MCF 10A (cell line): ENCODE measurements at regions of chr22 and their contacts with region 1.

Region 1: DNA sequence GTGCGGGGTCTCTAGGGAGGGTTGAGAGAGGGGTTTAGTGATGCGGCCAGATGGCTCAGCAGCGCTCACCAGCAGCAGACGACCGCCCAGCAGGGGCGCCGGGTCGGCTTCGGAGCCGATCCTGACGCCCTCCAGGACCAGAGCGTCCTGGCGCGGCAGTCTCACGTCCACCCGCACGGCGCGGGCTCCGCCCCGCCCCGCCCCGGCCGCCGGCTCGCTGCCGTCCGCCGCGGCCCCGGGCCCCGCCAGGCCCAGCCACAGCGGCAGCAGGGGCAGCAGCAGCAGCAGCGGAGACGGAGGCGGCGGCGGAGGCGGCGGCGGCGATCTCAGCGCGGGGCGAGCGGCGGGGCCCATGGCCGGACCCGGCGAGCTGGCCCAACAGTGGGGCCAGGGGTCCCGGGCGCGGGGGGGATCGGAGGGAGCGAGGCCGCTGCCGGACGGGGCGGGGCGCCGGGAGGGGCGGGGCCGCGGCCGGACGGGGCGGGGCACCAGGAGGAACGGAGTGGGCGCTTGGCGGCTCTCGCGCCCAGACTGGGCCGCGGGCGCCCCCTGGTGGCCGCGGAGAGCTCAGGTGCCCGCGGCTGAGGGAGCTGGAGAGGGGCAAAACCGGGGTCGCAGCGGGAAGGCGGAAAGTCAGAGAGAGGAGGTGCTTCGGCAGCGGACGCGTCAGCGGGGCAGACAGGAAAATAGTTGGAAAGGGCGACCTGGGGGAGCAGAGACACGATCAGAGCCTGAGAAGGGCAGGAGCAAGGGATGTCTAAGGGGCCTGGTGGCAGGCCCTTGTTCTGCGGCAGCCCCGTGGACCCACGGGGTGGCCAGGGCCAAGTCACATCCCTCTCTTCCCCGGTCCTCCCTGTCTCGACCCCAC is at the start of gene RNF215:
- DNase-seq: peak; percentile 74
- H3K4me3 Mint-ChIP-seq: peak within 1 kb of the TSS; percentile 79
- H3K27ac Mint-ChIP-seq: peak within 1 kb of the TSS; percentile 74
- H3K4me1 Mint-ChIP-seq: peaks cover 12% of the 10 kb centered on the region
- H3K27me3 Mint-ChIP-seq: no peaks in the 10 kb centered on the region
- CTCF ChIP-seq: peak; percentile 95
- total RNA-seq, gene RNF215: 18.4 and 19.6 TPM in 2 replicates

Region 2: GRCh38 chr22:30104501-30105156 is 282.6 kb before region 1 on chr22:
- CTCF ChIA-PET with region 1: interaction called, 13 read pairs
- POLR2A ChIA-PET with region 1: no interaction called
- intact Hi-C with region 1: loop called (anchors 1 kb)
- DNase-seq: no peak
- H3K4me3 Mint-ChIP-seq: no peak overlapping the region
- H3K27ac Mint-ChIP-seq: no peak overlapping the region
- H3K4me1 Mint-ChIP-seq: peaks cover 6% of the 10 kb centered on the region
- H3K27me3 Mint-ChIP-seq: no peaks in the 10 kb centered on the region
- CTCF ChIP-seq: no peak

Region 3: DNA sequence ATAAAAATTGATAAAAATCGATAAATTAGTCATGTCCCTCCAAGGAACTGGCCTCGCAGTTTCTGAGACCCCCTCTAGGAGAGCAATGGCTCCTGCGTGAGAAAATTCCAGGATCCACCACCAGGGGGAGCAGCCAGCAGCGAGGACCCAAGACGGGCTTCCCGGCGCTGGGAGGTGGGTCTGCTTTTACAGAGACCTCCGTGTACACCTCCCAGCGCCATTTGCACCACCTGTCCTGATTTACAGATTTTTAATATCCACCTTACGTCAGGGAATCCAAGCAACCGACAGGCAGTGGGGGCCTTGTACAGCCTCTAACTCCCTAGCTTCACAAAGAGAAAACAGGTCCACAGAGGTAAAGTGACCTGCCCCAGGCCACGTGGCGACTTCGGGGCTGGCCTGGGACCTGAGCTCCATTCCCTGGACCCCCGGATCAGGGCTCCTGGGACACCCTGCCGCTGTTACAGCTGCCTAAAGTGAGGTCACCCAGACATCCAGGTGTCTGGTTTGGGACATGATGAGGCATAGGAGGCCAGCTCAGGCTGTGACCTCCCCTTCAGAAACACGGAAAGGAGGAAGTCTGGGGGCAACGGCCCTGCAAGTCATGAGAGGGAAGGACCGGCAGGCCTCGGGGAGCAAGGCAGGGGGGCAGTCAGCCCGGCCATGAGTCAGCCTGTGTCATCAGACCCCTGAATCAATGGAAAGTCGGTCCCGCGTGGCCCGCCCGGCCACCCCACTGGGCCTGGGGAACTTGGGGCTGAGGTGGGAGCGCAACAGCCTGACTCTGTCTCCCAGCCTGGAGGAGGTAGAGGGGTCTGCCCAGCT is 124.1 kb before region 1 on chr22:
- CTCF ChIA-PET with region 1: interaction called, 8 read pairs
- POLR2A ChIA-PET with region 1: interaction called, 3 read pairs
- intact Hi-C with region 1: loop called (anchors 1 kb)
- DNase-seq: peak; percentile 64
- H3K4me3 Mint-ChIP-seq: peak overlapping the region; percentile 47
- H3K27ac Mint-ChIP-seq: no peak overlapping the region
- H3K4me1 Mint-ChIP-seq: peaks cover 6% of the 10 kb centered on the region
- H3K27me3 Mint-ChIP-seq: no peaks in the 10 kb centered on the region
- CTCF ChIP-seq: peak; percentile 99

Region 4: GRCh38 chr22:30402028-30402765 is 15.0 kb after region 1 on chr22:
- CTCF ChIA-PET with region 1: interaction called, 12 read pairs
- POLR2A ChIA-PET with region 1: interaction called, 3 read pairs
- intact Hi-C with region 1: no loop called
- DNase-seq: no peak
- H3K4me3 Mint-ChIP-seq: no peak overlapping the region
- H3K27ac Mint-ChIP-seq: peak overlapping the region; percentile 54
- H3K4me1 Mint-ChIP-seq: peaks cover 35% of the 10 kb centered on the region
- H3K27me3 Mint-ChIP-seq: no peaks in the 10 kb centered on the region
- CTCF ChIP-seq: no peak

Region 5: DNA sequence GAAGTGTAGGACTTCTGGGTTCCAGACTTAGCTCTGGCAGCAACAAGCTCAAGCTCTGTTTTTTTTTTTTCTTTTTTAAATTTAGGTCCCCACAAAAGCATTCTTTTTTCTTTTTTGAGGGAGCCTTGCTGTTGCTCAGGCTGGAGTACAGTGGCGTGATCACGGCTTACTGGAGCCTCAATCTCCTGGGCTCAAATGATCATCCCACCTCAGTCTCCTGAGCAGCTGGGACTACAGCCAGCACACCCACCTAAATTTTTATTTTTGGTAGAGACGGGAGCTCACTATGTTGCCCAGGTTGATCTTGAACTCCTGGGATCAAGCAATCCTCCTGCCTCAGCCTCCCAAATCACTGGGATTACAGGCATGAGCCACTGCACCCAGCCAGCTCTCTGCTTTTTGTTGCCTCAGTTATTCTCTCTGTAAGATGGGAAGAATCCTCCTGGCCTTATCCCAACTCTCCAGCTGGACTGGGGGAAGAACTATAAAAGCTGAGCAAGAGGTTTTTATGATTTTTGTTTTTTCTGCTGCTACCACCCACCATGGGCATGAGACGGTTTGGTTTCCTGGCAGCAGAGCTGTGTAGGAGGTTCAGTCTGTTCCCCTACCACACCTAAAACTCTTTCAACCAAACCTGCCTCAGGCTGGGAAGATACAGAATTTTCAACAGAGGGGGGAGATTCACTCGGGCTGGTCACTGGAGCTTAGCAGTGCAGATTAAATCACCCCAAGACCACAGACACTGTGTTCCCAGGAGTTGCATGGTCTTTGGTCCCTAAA is 26.7 kb after region 1 on chr22:
- CTCF ChIA-PET with region 1: interaction called, 17 read pairs
- POLR2A ChIA-PET with region 1: interaction called, 532 read pairs
- intact Hi-C with region 1: no loop called
- DNase-seq: peak; percentile 38
- H3K4me3 Mint-ChIP-seq: peak overlapping the region; percentile 12
- H3K27ac Mint-ChIP-seq: peak overlapping the region; percentile 66
- H3K4me1 Mint-ChIP-seq: peaks cover 41% of the 10 kb centered on the region
- H3K27me3 Mint-ChIP-seq: no peaks in the 10 kb centered on the region
- CTCF ChIP-seq: no peak

Region 6: DNA sequence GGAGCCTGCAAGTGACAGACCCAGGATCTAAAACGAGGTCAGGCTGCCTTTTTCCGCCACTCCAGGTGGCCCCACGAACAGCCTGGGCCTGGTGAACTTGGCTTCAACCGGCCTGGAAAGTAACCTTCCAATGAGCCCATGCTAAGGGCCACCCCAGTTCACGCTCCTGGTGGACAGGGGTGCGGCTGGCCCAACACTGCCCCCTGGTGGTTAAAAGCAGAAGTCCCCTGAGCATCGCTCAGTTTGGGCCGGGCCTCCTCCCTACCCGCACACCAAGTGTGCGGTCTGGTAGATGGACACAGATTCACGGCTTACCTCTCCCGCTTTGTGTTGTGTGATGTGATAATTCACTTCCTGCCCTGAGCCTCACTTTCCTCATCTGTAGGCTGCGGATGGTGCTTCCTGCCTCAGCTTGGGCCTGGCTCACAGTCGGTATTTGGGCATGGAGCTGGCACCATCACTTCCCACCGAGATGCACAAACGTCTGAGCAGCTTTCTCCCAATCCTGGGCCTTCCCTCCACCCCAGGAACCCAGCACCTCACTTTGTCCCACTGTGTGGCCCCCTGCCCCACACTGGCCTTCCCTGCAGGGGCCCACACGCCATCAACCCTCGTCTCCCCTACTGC is 98.3 kb after region 1 on chr22:
- CTCF ChIA-PET with region 1: interaction called, 43 read pairs
- POLR2A ChIA-PET with region 1: interaction called, 4 read pairs
- intact Hi-C with region 1: no loop called
- DNase-seq: peak; percentile 64
- H3K4me3 Mint-ChIP-seq: no peak overlapping the region
- H3K27ac Mint-ChIP-seq: no peak overlapping the region
- H3K4me1 Mint-ChIP-seq: peaks cover 8% of the 10 kb centered on the region
- H3K27me3 Mint-ChIP-seq: peaks cover 15% of the 10 kb centered on the region
- CTCF ChIP-seq: peak; percentile 96